A673 (cell line): ENCODE measurements at regions of chr11 and their contacts with region 1.

Region 1: GRCh38 chr11:69317401-69318092 is 23.6 kb downstream of the MYEOV start:
- DNase-seq: peak; percentile 72
- H3K4me3 ChIP-seq: no peak overlapping the region
- H3K27ac ChIP-seq: peak overlapping the region; percentile 86
- H3K4me1 ChIP-seq: peaks cover 67% of the 10 kb centered on the region
- H3K27me3 ChIP-seq: no peaks in the 10 kb centered on the region
- CTCF ChIP-seq: no peak

Region 2: GRCh38 chr11:69352715-69353325 is 35.3 kb after region 1 on chr11:
- CTCF ChIA-PET with region 1: interaction called, 4 read pairs
- POLR2A ChIA-PET with region 1: no interaction called
- intact Hi-C with region 1: loop called (anchors 2 kb)
- DNase-seq: peak; percentile 84
- H3K4me3 ChIP-seq: no peak overlapping the region
- H3K27ac ChIP-seq: peak overlapping the region; percentile 69
- H3K4me1 ChIP-seq: peaks cover 68% of the 10 kb centered on the region
- H3K27me3 ChIP-seq: no peaks in the 10 kb centered on the region
- CTCF ChIP-seq: no peak

Region 3: DNA sequence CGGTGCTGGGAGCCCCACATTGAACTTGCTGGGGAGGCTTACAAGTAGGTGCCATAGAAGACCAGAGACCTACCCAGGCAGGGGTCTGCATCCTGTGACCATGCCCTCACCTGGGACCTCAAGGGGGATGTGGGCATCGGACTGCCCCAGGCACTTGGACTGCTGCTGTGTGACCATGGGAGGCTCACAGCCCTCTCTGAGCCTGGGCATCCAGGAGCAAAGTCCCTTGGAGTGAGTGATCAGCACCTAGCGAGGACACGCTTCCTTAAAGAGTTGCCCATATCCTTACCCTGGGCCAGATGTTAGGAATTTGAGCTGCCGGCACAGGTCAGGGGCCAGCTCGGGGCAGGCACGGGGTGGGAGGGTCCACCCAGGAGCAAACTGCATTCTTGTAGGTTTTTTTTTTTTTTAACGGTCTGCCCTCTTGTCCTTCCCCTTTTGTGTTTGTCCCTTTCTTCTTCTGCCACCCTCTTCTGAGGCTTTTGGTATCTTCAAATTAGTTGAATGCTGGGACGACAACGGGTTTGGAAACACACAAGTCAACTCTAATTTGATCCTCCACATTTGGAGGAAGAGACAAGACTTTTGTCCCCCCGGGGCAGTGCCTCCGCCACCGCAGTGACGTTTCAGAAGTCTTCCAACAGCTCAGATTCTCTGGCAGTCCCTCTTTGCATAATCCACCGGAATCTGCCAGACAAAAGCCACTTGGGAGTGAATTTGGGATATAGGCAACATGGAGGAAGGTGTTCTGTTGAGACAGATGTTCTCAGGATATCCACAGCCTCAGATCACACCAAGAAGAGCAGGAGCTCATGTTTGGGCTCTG is 117.8 kb after region 1 on chr11:
- CTCF ChIA-PET with region 1: no interaction called
- POLR2A ChIA-PET with region 1: no interaction called
- intact Hi-C with region 1: no loop called
- DNase-seq: no peak
- H3K4me3 ChIP-seq: no peak overlapping the region
- H3K27ac ChIP-seq: no peak overlapping the region
- H3K4me1 ChIP-seq: no peaks in the 10 kb centered on the region
- H3K27me3 ChIP-seq: no peaks in the 10 kb centered on the region
- CTCF ChIP-seq: no peak